Activated CD4-positive, alpha-beta T cell treated with anti-CD3 and anti-CD28 coated beads, Interleukin-2, amount 10 ng/mL, durations not matched to agents 24 days and 14 days (primary cell): ENCODE measurements at regions of chr1 and their contacts with region 1.

Region 1: DNA sequence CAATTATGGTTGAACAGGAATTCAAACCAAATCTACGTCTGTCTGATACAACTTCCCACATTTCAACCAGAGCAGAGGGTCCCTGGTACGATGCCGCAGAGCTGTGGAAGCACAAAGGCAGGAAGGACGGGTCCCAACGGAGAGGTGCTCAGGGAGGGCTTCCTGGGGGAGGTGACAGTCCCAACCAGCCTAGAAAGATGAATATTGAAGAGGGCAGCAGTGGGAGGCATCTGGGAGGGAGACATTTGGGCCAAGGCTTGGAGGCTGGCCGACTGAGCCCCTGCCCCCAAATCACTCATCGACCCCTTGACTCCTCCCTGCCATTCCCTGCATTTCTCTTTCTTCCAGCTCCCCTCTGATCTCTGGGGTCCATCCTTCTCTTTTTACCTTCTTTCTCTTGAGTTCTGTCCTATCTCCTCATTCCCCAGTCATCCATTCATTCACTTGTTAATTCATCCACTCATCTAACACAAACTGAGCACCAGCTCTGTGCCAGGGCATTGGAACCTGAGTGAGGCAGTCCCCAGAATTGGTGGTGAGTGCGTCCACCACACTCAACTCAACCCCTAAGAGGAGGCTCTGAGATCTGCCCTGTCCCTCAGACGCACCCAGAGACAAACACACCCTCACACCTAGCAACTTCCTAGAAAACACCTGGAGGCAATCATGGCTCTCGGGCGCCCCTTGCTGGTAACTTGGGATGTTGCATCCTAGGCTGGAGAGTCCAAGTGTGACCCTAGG is 13.2 kb upstream of the CELA3B start:
- DNase-seq: peak; percentile 95
- H3K4me3 Mint-ChIP-seq: no peak overlapping the region
- H3K27ac Mint-ChIP-seq: peak overlapping the region; percentile 27
- H3K4me1 Mint-ChIP-seq: peaks cover 5% of the 10 kb centered on the region
- H3K27me3 Mint-ChIP-seq: peaks cover 3% of the 10 kb centered on the region

Region 2: DNA sequence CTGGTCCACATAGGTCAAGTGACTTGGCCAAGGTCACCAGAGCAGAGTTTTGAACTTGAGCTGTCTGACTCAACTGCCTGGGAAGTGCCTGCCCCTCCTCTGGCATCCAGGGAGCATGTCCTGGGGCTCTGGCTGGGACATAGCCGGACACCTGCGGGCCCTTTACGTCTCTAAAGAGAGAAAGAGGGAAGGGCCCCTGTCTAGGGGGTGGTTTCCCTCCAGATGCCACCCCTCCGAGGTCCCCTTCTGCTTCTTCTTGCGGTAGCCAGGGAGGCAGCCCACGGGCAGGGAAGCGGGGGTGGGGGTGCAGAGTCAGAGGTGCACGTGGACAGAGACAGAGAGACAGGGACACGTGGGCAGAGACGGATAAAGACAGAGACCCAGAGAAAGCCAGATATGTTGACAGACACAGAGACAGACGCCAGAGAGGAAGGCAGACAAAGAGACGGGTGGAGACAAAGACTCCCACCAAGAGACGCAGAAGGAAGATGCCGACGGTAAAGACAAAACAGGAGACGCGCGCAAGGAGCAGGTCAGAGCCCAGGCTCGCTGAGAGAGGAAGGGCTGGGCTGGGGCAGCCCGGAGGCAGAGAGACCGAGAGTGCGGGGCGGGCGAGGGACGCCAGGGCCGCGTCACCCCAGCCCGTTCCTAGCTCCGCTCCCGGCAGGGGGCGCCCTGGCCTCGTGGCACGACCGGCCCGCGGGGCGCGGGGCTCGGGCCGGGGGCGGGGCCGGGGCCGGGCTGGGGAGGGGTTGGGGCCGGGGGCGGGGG is 454.9 kb before region 1 on chr1:
- intact Hi-C with region 1: loop called (anchors 10 kb)
- DNase-seq: peak; percentile 91
- H3K4me3 Mint-ChIP-seq: peak overlapping the region; percentile 77
- H3K27ac Mint-ChIP-seq: peak overlapping the region; percentile 34
- H3K4me1 Mint-ChIP-seq: peaks cover 5% of the 10 kb centered on the region
- H3K27me3 Mint-ChIP-seq: peaks cover 42% of the 10 kb centered on the region

Region 3: GRCh38 chr1:21659099-21659923 is 304.3 kb before region 1 on chr1:
- intact Hi-C with region 1: loop called (anchors 10 kb)
- DNase-seq: peak; percentile 96
- H3K4me3 Mint-ChIP-seq: peak overlapping the region; percentile 72
- H3K27ac Mint-ChIP-seq: no peak overlapping the region
- H3K4me1 Mint-ChIP-seq: peaks cover 8% of the 10 kb centered on the region
- H3K27me3 Mint-ChIP-seq: peaks cover 27% of the 10 kb centered on the region

Region 4: DNA sequence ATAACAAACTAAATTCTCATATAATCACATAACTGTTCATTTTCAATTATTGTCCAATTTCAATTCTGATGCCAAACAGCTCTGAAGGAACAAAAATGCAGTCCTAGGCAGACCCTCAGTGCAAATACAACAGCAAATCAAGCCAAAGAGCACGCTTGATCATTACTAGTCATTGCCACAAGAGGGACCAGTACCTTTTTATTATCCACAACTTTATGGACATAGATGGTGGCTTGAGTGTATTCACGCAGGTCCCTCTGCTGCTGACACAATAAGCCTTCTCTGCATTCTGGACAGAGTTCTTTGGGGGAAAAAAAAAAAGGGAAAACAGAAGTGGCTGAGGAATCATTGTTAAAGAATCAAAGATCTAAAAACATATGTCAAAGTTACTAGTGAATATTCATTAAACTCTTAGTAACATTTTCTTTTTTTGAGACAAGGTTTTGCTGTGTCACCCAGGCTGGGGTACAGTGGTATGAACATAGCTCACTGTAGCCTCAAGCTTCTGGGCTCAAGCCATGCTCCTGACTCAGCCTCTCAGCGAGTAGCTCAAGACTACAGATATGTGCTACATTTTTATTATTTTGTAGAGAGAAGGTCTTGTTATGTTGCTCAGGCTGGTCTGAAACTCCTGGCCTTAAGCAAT is 260.2 kb before region 1 on chr1:
- intact Hi-C with region 1: loop called (anchors 10 kb)
- DNase-seq: peak; percentile 60
- H3K4me3 Mint-ChIP-seq: no peak overlapping the region
- H3K27ac Mint-ChIP-seq: peak overlapping the region; percentile 59
- H3K4me1 Mint-ChIP-seq: peaks cover 20% of the 10 kb centered on the region
- H3K27me3 Mint-ChIP-seq: no peaks in the 10 kb centered on the region

Region 5: GRCh38 chr1:22089787-22090186 is 126.1 kb after region 1 on chr1:
- intact Hi-C with region 1: no loop called
- DNase-seq: peak; percentile 76
- H3K4me3 Mint-ChIP-seq: peak overlapping the region; percentile 82
- H3K27ac Mint-ChIP-seq: peak overlapping the region; percentile 87
- H3K4me1 Mint-ChIP-seq: peaks cover 70% of the 10 kb centered on the region
- H3K27me3 Mint-ChIP-seq: no peaks in the 10 kb centered on the region

Region 6: DNA sequence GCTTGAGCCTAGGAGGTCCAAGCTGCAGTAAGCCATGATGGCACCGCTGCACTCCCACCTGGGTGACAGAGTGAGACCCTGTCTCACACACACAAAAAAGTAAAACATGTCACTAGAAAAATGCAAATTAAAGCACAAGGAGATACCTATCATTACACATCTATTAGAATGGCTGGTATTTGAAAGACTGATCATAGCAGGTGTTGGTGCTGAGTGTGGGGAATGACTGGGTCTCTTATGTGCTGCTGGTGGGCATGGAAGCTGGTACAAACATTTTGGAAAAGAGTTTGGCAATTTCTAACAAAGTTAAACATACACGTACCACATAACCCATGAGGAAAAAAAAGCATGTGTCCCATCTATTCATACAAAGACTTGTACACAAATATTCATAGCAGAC is 345.9 kb after region 1 on chr1:
- intact Hi-C with region 1: no loop called
- DNase-seq: no peak
- H3K4me3 Mint-ChIP-seq: no peak overlapping the region
- H3K27ac Mint-ChIP-seq: no peak overlapping the region
- H3K4me1 Mint-ChIP-seq: no peaks in the 10 kb centered on the region
- H3K27me3 Mint-ChIP-seq: peaks cover 18% of the 10 kb centered on the region

Region 7: DNA sequence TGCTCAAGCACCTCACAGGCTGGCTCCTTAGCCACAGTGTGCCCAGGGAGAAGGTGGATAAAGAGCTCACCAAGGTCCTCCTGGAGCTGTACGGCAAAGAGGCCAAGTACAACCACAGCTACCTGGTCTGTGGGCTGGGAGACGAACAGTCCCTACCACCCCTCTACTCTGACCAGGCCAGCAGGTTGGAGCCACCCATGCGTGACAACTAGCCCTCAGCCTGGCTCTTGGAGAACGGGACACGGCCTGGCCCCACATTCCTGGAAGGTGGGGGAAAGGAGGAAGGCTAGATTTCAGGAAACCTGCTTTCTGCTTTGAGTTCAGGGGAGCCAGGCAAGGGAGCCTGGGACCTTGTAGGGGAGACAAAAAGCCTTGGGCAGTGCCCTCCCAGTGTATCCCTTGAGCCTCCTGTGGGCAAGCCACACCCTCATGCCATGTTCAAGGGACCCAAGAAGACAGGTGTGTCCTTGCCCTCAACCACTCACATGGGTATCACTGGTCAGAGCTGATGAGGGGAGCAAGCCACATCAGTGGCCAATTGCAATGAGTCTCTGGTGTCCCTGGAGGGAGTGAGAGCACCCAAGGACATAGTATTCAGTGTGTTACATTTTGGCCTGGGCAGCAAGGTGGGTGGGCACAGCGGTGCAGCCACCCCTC is 1177.4 kb after region 1 on chr1:
- intact Hi-C with region 1: no loop called
- DNase-seq: no peak
- H3K4me3 Mint-ChIP-seq: no peak overlapping the region
- H3K27ac Mint-ChIP-seq: no peak overlapping the region
- H3K4me1 Mint-ChIP-seq: peaks cover 7% of the 10 kb centered on the region
- H3K27me3 Mint-ChIP-seq: no peaks in the 10 kb centered on the region